Mammary epithelial cell (primary cell): ENCODE measurements at regions of chr19 and their contacts with region 1.

Region 1: GRCh38 chr19:11924886-11925650 is at the start of gene ZNF700:
- DNase-seq: peak; percentile 89
- H3K4me3 ChIP-seq: peak within 1 kb of the TSS; percentile 75 to 91 (median 79)
- H3K27ac ChIP-seq: peak within 1 kb of the TSS; percentile 65
- H3K4me1 ChIP-seq: peaks cover 6% of the 10 kb centered on the region
- H3K27me3 ChIP-seq: no peaks in the 10 kb centered on the region
- CTCF ChIP-seq: no peak
- total RNA-seq, gene ZNF700: 8.2 to 10.4 TPM

Region 2: GRCh38 chr19:11269408-11269807 is 655.7 kb before region 1 on chr19:
- CTCF ChIA-PET with region 1: no interaction called
- dilution Hi-C with region 1: no loop called
- in situ Hi-C with region 1: no loop called
- intact Hi-C with region 1: no loop called
- DNase-seq: peak; percentile 29
- H3K4me3 ChIP-seq: no peak overlapping the region
- H3K27ac ChIP-seq: peak overlapping the region; percentile 19
- H3K4me1 ChIP-seq: peaks cover 25% of the 10 kb centered on the region
- H3K27me3 ChIP-seq: no peaks in the 10 kb centered on the region
- CTCF ChIP-seq: no peak

Region 3: GRCh38 chr19:11535792-11536595 is 389.1 kb before region 1 on chr19:
- CTCF ChIA-PET with region 1: no interaction called
- dilution Hi-C with region 1: no loop called
- in situ Hi-C with region 1: no loop called
- intact Hi-C with region 1: no loop called
- DNase-seq: peak; percentile 73
- H3K4me3 ChIP-seq: peak overlapping the region in 2 of 3 experiments; percentile 23 to 24
- H3K27ac ChIP-seq: peak overlapping the region; percentile 38
- H3K4me1 ChIP-seq: peaks cover 19% of the 10 kb centered on the region
- H3K27me3 ChIP-seq: no peaks in the 10 kb centered on the region
- CTCF ChIP-seq: peak; percentile 51 to 89

Region 4: GRCh38 chr19:11673608-11674041 is 251.4 kb before region 1 on chr19:
- CTCF ChIA-PET with region 1: no interaction called
- dilution Hi-C with region 1: no loop called
- in situ Hi-C with region 1: no loop called
- intact Hi-C with region 1: no loop called
- DNase-seq: no peak
- H3K4me3 ChIP-seq: peak overlapping the region in 1 of 3 experiments; percentile 24
- H3K27ac ChIP-seq: no peak overlapping the region
- H3K4me1 ChIP-seq: no peaks in the 10 kb centered on the region
- H3K27me3 ChIP-seq: no peaks in the 10 kb centered on the region
- CTCF ChIP-seq: peak; percentile 26 to 62

Region 5: GRCh38 chr19:11814029-11814699 is 110.9 kb before region 1 on chr19 and contains the start of gene ZNF440:
- CTCF ChIA-PET with region 1: no interaction called
- dilution Hi-C with region 1: no loop called
- in situ Hi-C with region 1: no loop called
- intact Hi-C with region 1: no loop called
- DNase-seq: peak; percentile 92
- H3K4me3 ChIP-seq: peak within 1 kb of the TSS; percentile 95 to 97 (median 97)
- H3K27ac ChIP-seq: peak within 1 kb of the TSS; percentile 72
- H3K4me1 ChIP-seq: no peaks in the 10 kb centered on the region
- H3K27me3 ChIP-seq: no peaks in the 10 kb centered on the region
- CTCF ChIP-seq: no peak
- total RNA-seq, gene ZNF440: 8.3 to 10.4 TPM

Region 6: GRCh38 chr19:11843722-11844121 is 81.3 kb before region 1 on chr19:
- CTCF ChIA-PET with region 1: no interaction called
- dilution Hi-C with region 1: loop called (anchors 5 kb)
- in situ Hi-C with region 1: no loop called
- intact Hi-C with region 1: no loop called
- DNase-seq: no peak
- H3K4me3 ChIP-seq: no peak overlapping the region
- H3K27ac ChIP-seq: no peak overlapping the region
- H3K4me1 ChIP-seq: no peaks in the 10 kb centered on the region
- H3K27me3 ChIP-seq: no peaks in the 10 kb centered on the region
- CTCF ChIP-seq: no peak

Region 7: GRCh38 chr19:11964858-11965645 is 40.0 kb after region 1 on chr19 and contains the start of gene ZNF763:
- CTCF ChIA-PET with region 1: no interaction called
- dilution Hi-C with region 1: no loop called
- in situ Hi-C with region 1: no loop called
- intact Hi-C with region 1: loop called (anchors 2 kb)
- DNase-seq: peak; percentile 70
- H3K4me3 ChIP-seq: peak within 1 kb of the TSS; percentile 39 to 63 (median 46)
- H3K27ac ChIP-seq: no peak within 1 kb of the TSS
- H3K4me1 ChIP-seq: no peaks in the 10 kb centered on the region
- H3K27me3 ChIP-seq: no peaks in the 10 kb centered on the region
- CTCF ChIP-seq: no peak
- total RNA-seq, gene ZNF763: 1.6 to 2.0 TPM

Region 8: GRCh38 chr19:12055783-12056182 is 130.7 kb after region 1 on chr19:
- CTCF ChIA-PET with region 1: no interaction called
- dilution Hi-C with region 1: no loop called
- in situ Hi-C with region 1: no loop called
- intact Hi-C with region 1: loop called (anchors 1 kb)
- DNase-seq: no peak
- H3K4me3 ChIP-seq: no peak overlapping the region
- H3K27ac ChIP-seq: no peak overlapping the region
- H3K4me1 ChIP-seq: peaks cover 4% of the 10 kb centered on the region
- H3K27me3 ChIP-seq: peaks cover 2% of the 10 kb centered on the region
- CTCF ChIP-seq: no peak

Region 9: DNA sequence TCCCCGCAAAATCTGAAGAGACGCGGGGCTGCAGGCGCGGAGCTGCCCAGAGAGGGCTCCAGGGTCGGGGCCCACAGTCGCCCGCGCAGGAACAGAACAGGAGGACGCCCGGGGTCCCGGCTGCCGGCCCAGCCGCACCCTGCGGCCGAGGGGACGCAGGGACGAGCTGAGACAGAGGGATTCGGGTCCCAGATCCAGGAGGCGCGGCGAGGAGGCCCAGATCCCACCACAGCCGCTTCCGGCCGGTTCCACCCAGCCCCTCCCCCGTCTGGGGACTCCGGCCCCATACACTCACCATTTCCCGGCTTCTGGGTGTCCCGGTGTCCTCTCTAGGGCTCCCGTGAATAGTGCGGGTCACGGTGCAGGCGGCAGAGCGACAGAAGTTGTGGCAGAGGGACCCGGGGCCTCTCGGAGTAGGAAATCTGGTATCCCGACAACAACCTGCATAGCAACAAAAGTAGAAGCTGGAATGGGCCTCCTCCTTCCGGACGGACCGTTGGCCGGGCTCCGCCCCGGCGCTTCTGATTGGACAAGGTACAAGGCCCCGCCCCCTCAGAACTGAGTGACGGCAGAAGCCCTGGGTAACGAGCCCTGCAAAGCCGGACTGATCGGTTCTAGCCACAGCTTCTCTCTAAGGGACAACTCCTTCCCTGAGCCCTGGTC is 214.9 kb after region 1 on chr19 and contains the start of gene ZNF20:
- CTCF ChIA-PET with region 1: interaction called, 7 read pairs
- dilution Hi-C with region 1: no loop called
- in situ Hi-C with region 1: no loop called
- intact Hi-C with region 1: loop called (anchors 1 kb)
- DNase-seq: peak; percentile 91
- H3K4me3 ChIP-seq: peak within 1 kb of the TSS; percentile 61 to 99 (median 88)
- H3K27ac ChIP-seq: peak within 1 kb of the TSS; percentile 81
- H3K4me1 ChIP-seq: peaks cover 11% of the 10 kb centered on the region
- H3K27me3 ChIP-seq: no peaks in the 10 kb centered on the region
- CTCF ChIP-seq: no peak
- total RNA-seq, gene ZNF20: 5.2 to 7.3 TPM